GM18951 (cell line): ENCODE measurements at regions of chr4 and their contacts with region 1.

Region 1: DNA sequence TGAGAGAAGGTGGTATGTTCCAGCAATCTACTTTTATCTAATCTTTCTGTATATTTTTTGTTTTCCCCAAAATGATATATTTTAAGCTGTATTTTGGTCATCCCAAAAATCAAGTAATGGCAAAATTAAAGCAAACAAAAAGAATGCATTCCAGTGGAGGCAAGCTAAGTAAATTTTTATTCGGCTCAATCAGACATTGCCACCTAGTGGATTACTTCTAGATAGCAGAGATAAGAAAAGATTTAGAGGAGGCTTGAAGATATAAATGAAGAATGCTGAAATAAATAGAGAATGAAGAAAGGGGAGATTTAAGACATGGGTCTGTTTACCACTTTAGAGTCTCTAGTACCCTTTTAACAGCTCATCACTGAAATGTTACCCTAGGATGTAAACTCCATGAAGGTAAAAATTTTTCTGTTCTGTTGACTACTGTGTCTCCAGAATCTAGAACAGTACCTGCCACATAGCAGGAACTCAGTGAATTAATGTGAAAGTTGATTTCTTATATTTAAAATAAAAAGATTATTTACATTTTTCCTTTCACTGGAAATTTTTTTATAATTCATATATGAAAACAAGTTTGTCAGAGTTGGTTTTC is 110.9 kb upstream of the ANK2 start:
- POLR2A ChIP-seq: no peak

Region 2: GRCh38 chr4:112327965-112328733 is 610.4 kb before region 1 on chr4:
- in situ Hi-C with region 1: loop called (anchors 25 kb)
- POLR2A ChIP-seq: no peak

Region 3: DNA sequence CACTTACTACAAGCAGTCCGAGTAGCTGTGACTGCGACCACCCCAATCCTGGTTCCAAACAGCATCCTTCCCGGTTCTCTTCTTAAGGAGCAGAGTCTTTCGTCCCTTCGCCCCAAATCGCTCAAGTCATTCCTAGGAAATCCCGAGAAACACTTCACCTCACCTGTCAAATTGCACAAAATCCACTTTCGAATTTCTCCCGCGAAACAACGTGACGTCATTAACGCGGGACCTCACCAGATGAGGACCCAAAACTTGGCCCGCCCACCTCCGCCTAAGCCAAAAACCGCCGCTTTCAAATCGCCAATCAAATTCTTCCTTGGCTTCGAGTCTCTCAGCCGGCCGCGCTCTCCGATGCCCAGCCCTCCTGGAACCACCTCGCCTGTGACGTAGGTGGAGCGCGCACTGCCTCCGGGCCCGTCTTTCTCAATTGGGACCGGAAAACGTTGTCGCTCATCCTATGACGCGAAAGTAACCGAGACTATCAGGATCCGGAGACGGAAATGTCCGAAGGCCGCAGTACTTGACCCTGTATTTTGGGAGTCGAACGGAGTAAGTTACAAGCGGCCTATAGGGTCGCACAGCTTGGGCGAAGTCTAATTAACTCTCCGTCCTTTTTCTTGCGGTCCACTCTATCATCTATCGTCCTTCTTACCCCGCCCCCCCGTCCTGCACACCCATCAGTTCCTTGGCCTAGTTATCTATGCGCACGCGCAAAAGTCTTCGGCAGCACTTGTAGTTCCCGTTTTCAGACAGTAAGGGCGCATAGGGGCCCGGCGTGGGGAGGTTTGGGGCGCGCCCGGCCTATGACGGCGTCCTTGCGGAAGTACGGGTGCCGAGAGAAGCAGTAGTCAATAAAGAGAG is 301.6 kb before region 1 on chr4 and contains the starts of genes LARP7 and ZGRF1:
- in situ Hi-C with region 1: loop called (anchors 25 kb)
- POLR2A ChIP-seq: peak; percentile 56

Region 4: DNA sequence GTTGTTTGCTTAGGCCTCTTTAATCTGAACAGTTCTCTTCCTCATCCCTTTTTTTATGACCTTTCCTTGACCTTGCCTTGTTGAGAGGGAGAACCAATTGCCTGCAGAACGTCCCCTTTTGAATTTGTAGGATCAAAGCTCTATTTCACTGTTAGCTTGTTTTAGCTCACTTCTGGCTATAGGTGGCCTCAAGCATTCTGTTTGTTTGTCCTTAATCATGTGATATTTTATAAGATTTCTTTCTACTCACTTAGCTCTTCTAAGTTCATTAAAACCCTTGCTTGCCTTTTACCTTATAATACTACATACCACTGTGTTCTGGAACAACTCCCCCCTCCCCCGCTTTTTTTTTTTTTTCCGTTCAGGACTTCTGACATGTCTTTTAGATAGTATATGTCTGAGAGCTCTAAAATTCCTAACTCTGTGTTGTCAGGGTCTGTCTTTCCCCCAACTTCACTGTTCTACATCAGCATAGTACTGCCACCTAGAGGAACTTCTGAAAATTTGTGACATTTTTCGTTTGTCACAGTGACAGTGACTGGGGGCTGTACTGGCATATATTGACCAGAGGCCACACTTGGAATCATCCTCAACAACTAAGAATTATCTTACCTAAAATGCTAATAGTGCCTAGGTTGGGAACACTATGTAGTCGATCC is 173.1 kb before region 1 on chr4:
- in situ Hi-C with region 1: loop called (anchors 25 kb)
- POLR2A ChIP-seq: no peak

Region 5: DNA sequence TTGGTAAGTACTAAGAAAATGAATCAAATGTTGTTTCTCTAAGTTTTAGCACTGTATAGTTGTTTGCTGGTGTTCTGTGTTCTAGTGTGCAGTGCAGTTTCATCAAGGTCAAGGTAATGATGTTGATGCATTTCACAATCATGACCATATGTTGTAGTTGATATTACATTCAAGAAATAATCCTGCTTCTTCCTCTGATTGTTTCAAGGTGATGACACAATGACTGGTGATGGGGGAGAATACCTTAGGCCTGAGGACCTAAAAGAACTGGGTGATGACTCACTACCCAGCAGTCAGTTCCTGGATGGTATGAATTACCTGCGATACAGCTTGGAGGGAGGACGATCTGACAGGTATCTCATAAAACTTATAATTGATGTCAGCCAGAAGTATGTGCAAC is 372.5 kb after region 1 on chr4:
- in situ Hi-C with region 1: no loop called
- POLR2A ChIP-seq: no peak